Mammary epithelial cell (primary cell): ENCODE measurements at regions of chr2 and their contacts with region 1.

Region 1: GRCh38 chr2:100482741-100483140 is 12.5 kb downstream of the NMS start:
- DNase-seq: no peak
- H3K4me3 ChIP-seq: no peak overlapping the region
- H3K27ac ChIP-seq: no peak overlapping the region
- H3K4me1 ChIP-seq: no peaks in the 10 kb centered on the region
- H3K27me3 ChIP-seq: no peaks in the 10 kb centered on the region
- CTCF ChIP-seq: no peak

Region 2: DNA sequence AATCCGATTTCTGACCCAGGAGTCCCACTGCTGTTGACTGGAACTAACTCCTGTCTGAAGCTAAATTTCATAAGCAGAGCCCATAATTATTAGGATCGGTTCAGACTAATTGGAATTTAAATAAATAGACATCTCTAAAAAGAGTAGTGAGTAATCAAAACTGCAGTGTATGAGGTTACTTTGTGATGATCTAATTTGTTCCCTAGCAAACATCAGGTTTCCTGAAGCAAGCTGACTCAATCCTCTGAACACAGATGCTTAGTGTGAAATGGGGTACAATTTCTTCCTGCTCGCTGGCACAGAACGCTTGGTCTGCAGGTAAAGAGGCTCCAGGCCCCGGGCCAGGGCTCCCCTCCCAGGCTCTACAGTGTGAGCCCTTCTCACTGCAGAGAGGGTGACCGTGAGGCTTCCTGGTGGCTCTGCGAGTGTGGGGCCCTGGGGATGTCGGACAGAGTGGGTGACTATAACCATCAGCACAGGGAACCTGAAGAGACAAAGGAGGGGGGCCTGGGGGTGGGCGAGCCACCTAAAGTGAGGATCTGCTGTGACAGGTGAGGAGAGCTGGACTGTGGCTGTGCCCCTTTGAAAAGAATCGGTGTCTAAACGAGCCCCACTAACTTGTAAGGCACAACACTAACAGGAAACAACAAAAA is 85.5 kb before region 1 on chr2:
- CTCF ChIA-PET with region 1: no interaction called
- dilution Hi-C with region 1: loop called (anchors 5 kb)
- in situ Hi-C with region 1: no loop called
- intact Hi-C with region 1: no loop called
- DNase-seq: no peak
- H3K4me3 ChIP-seq: no peak overlapping the region
- H3K27ac ChIP-seq: no peak overlapping the region
- H3K4me1 ChIP-seq: no peaks in the 10 kb centered on the region
- H3K27me3 ChIP-seq: no peaks in the 10 kb centered on the region
- CTCF ChIP-seq: no peak

Region 3: GRCh38 chr2:100422320-100423055 is 60.3 kb before region 1 on chr2:
- CTCF ChIA-PET with region 1: no interaction called
- dilution Hi-C with region 1: loop called (anchors 5 kb)
- in situ Hi-C with region 1: no loop called
- intact Hi-C with region 1: no loop called
- DNase-seq: peak; percentile 11
- H3K4me3 ChIP-seq: no peak overlapping the region
- H3K27ac ChIP-seq: no peak overlapping the region
- H3K4me1 ChIP-seq: peaks cover 3% of the 10 kb centered on the region
- H3K27me3 ChIP-seq: peaks cover 3% of the 10 kb centered on the region
- CTCF ChIP-seq: peak; percentile 57 to 67

Region 4: DNA sequence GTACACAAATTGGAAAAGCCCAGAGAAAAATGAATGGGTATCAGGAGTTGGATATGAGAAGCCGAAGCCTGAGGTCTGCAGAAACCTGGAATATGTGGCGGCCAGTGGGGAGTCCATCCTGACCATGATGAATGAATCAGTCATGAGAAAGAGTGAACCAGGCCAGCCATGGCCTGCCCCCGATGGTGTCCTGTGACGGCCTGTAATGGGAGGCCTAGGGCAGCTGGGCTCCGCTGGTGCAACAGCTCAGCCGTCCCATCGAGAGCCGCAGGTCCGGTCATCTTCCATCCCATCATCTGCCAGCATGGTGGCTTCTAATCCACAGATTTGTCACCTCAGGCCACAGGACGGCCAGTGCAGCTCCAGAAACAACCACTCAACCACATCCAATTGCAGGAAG is 196.5 kb after region 1 on chr2:
- CTCF ChIA-PET with region 1: no interaction called
- dilution Hi-C with region 1: no loop called
- in situ Hi-C with region 1: no loop called
- intact Hi-C with region 1: no loop called
- DNase-seq: no peak
- H3K4me3 ChIP-seq: no peak overlapping the region
- H3K27ac ChIP-seq: no peak overlapping the region
- H3K4me1 ChIP-seq: no peaks in the 10 kb centered on the region
- H3K27me3 ChIP-seq: no peaks in the 10 kb centered on the region
- CTCF ChIP-seq: no peak